GM12878 (cell line): ENCODE measurements at regions of chr1 and their contacts with region 1.

Region 1: DNA sequence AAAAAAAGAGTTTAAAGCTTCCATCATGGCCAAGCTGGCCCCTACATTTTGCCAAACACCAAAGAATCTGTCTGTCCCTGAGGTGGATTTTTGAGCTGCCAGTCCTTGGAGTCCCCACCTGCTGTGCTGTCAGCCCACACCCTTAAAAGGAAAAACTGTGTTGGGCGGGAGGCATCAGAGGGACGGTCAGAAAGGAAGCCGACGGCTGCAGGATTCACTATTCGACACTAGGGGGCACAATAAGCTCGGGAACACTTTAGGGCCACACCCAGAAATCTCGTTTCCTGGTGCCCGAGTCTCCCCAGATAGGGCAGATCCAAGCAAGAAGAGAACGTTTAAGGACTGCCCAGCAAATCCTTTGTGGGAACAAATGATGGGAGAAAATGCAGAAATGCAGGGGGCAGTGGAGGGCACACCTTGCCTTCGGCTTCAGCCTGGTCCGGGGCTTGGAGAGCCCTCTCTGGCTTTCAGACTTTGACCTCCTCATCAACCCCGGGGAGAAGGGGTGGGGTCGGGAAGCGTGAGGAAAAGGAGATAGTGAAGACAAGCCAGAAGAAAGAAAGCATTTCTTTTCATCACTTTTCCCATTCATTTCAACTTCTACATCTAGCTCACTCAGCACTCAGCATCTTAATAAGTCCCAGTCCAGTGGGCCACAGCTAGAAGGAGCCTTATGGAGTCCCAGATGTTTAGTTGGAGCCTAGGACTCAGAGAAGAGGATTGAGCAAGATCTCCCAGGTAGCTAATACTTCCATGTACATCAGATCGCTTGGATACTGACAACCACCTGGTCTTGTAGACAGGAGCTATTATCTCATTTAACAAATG is 5.0 kb upstream of the CTTNBP2NL start:
- DNase-seq: peak; percentile 63
- ATAC-seq: peak; percentile 81
- H3K4me3 ChIP-seq: peak overlapping the region; percentile 79
- H3K27ac ChIP-seq: no peak overlapping the region
- H3K4me1 ChIP-seq: peaks cover 18% of the 10 kb centered on the region
- H3K27me3 ChIP-seq: no peaks in the 10 kb centered on the region
- CTCF ChIP-seq: peak; percentile 88 to 96 (median 95)
- EP300 ChIP-seq: no peak
- POLR2A ChIP-seq: no peak
- RAD21 ChIP-seq: peak; percentile 94

Region 2: GRCh38 chr1:112040891-112041740 is 349.9 kb before region 1 on chr1:
- CTCF ChIA-PET with region 1: no interaction called
- POLR2A ChIA-PET with region 1: no interaction called
- RAD21 ChIA-PET with region 1: no interaction called
- SMC1A ChIA-PET with region 1: no interaction called
- in situ Hi-C with region 1: no loop called
- intact Hi-C with region 1: no loop called
- DNase-seq: no peak
- ATAC-seq: peak; percentile 45; the same call in 1 of the 3 replicates
- H3K4me3 ChIP-seq: no peak overlapping the region
- H3K27ac ChIP-seq: no peak overlapping the region
- H3K4me1 ChIP-seq: peaks cover 3% of the 10 kb centered on the region; the same call in 1 of the 2 replicates
- H3K27me3 ChIP-seq: no peaks in the 10 kb centered on the region; a peak in 2 of 4 replicates
- CTCF ChIP-seq: no peak
- EP300 ChIP-seq: no peak
- POLR2A ChIP-seq: no peak
- RAD21 ChIP-seq: no peak

Region 3: GRCh38 chr1:112410673-112411072 is 19.7 kb after region 1 on chr1:
- CTCF ChIA-PET with region 1: interaction called, 10 read pairs
- POLR2A ChIA-PET with region 1: interaction called, 3 read pairs
- RAD21 ChIA-PET with region 1: interaction called, 4 read pairs
- SMC1A ChIA-PET with region 1: interaction called, 7 read pairs
- in situ Hi-C with region 1: no loop called
- intact Hi-C with region 1: no loop called
- DNase-seq: no peak
- ATAC-seq: no peak
- H3K4me3 ChIP-seq: no peak overlapping the region
- H3K27ac ChIP-seq: no peak overlapping the region
- H3K4me1 ChIP-seq: no peaks in the 10 kb centered on the region
- H3K27me3 ChIP-seq: no peaks in the 10 kb centered on the region
- CTCF ChIP-seq: no peak
- EP300 ChIP-seq: no peak
- POLR2A ChIP-seq: no peak
- RAD21 ChIP-seq: no peak

Region 4: DNA sequence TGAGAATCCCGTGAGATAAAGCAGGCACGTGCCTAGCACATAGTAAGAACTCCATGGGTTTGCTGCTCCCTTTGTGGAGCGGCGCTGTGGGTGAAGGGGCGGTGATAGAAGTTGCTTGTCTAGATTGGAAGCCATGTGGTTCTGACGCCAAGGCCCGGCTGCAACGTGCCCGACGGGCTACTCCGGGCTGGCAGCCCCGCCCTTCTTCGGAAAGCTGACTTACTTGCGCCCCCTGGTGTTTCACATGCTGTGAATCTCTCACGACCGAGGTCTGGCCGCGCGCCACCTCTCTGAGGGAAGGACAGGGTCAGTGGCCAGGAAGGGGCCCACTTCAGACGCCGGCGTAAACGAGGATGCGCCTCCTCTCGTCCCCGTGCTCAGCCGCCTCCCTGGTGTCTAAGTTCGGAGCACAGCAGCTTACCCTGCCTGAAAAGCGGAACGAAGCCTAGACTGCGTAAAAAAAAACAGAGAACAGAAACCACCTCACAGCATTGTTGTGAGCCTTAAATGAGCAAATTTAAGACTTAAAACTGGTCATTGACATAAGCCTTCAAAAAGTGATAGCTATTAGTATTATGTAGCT is 75.2 kb after region 1 on chr1:
- CTCF ChIA-PET with region 1: interaction called, 195 read pairs
- POLR2A ChIA-PET with region 1: interaction called, 22 read pairs
- RAD21 ChIA-PET with region 1: interaction called, 46 read pairs
- SMC1A ChIA-PET with region 1: interaction called, 80 read pairs
- in situ Hi-C with region 1: loop called (anchors 5 kb)
- intact Hi-C with region 1: loop called (anchors 1 kb)
- DNase-seq: peak; percentile 95
- ATAC-seq: peak; percentile 99
- H3K4me3 ChIP-seq: no peak overlapping the region
- H3K27ac ChIP-seq: peak overlapping the region; percentile 14
- H3K4me1 ChIP-seq: peaks cover 15% of the 10 kb centered on the region
- H3K27me3 ChIP-seq: no peaks in the 10 kb centered on the region
- CTCF ChIP-seq: peak; percentile 77 to 91 (median 81); a peak in 5 of 6 replicates
- EP300 ChIP-seq: peak; percentile 85 to 94; a peak in 3 of 4 replicates
- POLR2A ChIP-seq: peak; percentile 61
- RAD21 ChIP-seq: peak; percentile 72

Region 5: DNA sequence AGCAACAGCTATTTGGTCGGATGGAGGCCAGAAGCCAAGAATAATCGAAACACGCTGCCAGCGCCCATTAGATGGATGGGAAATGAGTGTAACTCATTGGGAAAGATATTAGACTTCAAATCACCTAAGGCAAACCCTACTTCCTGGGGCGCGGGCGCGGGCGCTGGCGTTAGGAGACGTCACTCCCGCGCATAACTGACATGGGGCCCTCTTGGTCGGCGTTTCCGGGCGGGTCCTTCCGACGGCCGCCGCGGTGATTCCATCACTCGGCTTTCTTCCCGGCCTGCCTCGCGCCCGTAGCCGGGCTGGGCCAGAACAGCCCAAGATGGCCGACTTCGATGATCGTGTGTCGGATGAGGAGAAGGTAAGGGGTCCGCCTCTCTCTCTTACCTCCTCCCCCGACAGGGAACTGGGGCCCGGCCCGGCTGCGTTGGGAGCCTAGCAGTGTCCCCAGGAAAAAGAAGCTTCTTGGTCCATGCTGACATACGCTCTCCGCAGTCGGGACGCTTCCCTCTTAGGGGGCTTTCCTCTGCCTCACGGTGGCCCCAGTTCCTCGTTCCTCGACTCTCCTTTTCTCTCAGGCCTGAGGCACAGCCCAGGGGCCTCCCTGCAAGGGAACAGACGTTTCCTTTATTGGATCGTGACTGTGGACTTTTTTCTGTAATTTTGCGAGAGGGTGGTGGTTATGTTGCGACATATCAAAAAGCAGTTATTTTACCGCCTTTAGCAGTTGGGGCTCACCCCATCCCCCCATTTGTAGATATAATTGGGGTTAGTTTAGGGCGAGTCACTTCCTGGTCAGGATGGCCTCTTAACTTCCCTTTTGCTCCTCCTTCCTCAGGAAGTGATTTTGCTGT is 228.8 kb after region 1 on chr1 and contains the start of gene CAPZA1:
- CTCF ChIA-PET with region 1: interaction called, 330 read pairs
- POLR2A ChIA-PET with region 1: interaction called, 14 read pairs
- RAD21 ChIA-PET with region 1: interaction called, 49 read pairs
- SMC1A ChIA-PET with region 1: interaction called, 125 read pairs
- in situ Hi-C with region 1: loop called (anchors 5 kb)
- intact Hi-C with region 1: loop called (anchors 1 kb)
- DNase-seq: peak; percentile 62
- ATAC-seq: peak; percentile 85
- H3K4me3 ChIP-seq: peak within 1 kb of the TSS; percentile 77
- H3K27ac ChIP-seq: peak within 1 kb of the TSS; percentile 100
- H3K4me1 ChIP-seq: peaks cover 4% of the 10 kb centered on the region
- H3K27me3 ChIP-seq: no peaks in the 10 kb centered on the region
- CTCF ChIP-seq: no peak
- EP300 ChIP-seq: peak in 1 of 2 experiments; percentile 32; a peak in 1 of 4 replicates
- POLR2A ChIP-seq: peak; percentile 93
- RAD21 ChIP-seq: no peak
- polyA plus RNA-seq, gene CAPZA1: 401 to 886 TPM

Region 6: DNA sequence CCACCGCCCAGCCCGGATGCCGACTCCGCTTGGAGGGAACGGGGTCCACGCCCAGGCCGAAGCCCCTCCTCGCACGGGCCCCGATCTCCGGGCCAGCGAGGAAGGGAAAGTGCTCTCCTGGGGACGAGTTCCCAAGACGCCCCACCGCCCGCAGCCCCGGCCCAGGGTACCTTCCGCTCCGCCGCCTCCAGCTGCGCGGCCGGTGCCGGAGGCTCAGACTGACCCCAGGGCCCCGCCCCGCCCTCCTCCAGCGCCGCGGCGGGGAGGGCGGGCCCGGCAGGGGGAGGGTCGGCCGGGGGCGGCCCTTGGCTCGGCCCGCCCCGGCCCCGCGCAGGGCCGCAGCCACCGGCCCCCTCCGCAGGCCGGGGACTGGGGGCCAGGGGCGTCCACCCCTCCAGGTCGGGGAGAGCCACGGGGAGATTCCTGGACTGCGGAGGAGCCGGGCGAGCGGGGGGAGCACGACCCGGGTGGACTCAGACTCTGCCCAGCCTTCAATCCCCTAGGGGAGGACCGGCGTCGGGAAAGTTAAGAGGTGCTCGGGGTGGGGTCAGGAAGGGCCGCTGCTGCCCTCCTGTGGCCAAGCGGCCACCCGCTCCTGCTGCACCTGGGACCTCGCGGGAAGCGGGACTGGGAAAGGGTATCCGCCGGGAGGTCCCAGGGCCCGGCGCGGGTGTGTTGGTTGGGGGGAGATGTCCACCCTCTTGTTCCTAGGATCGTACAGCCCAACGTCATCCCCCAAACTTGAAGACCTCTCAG is 316.1 kb after region 1 on chr1 and contains the start of gene RHOC:
- CTCF ChIA-PET with region 1: interaction called, 122 read pairs
- POLR2A ChIA-PET with region 1: interaction called, 6 read pairs
- RAD21 ChIA-PET with region 1: interaction called, 53 read pairs
- SMC1A ChIA-PET with region 1: interaction called, 47 read pairs
- in situ Hi-C with region 1: loop called (anchors 5 kb)
- intact Hi-C with region 1: loop called (anchors 1 kb)
- DNase-seq: no peak
- ATAC-seq: peak; percentile 83
- H3K4me3 ChIP-seq: peak within 1 kb of the TSS; percentile 91
- H3K27ac ChIP-seq: peak within 1 kb of the TSS; percentile 81
- H3K4me1 ChIP-seq: peaks cover 16% of the 10 kb centered on the region
- H3K27me3 ChIP-seq: no peaks in the 10 kb centered on the region
- CTCF ChIP-seq: peak; percentile 84 to 98 (median 97)
- EP300 ChIP-seq: no peak
- POLR2A ChIP-seq: peak; percentile 78
- RAD21 ChIP-seq: peak; percentile 85
- polyA plus RNA-seq, gene RHOC: 20.6 to 37.9 TPM